Naive thymus-derived CD4-positive, alpha-beta T cell (primary cell): ENCODE measurements at regions of chr17 and their contacts with region 1.

Region 1: GRCh38 chr17:30477083-30477773 is at the start of gene GOSR1:
- DNase-seq: peak; percentile 78 to 92 (median 90)
- ATAC-seq: peak; percentile 99
- H3K4me3 ChIP-seq: peak within 1 kb of the TSS; percentile 82
- H3K4me3 Mint-ChIP-seq: peak within 1 kb of the TSS; percentile 92 to 99 (median 97)
- H3K27ac ChIP-seq: peak within 1 kb of the TSS; percentile 100
- H3K27ac Mint-ChIP-seq: peak within 1 kb of the TSS; percentile 94 to 99 (median 99)
- H3K4me1 ChIP-seq: peaks cover 11 to 13% of the 10 kb centered on the region in 2 donors
- H3K4me1 Mint-ChIP-seq: peaks cover 18 to 59% (median 47%) of the 10 kb centered on the region in 7 donors
- H3K27me3 ChIP-seq: no peaks in the 10 kb centered on the region
- H3K27me3 Mint-ChIP-seq: peaks cover 0 to 7% (median 2%) of the 10 kb centered on the region in 5 donors
- total RNA-seq, gene GOSR1: 45.1 to 70.8 (median 62.9) TPM

Region 2: DNA sequence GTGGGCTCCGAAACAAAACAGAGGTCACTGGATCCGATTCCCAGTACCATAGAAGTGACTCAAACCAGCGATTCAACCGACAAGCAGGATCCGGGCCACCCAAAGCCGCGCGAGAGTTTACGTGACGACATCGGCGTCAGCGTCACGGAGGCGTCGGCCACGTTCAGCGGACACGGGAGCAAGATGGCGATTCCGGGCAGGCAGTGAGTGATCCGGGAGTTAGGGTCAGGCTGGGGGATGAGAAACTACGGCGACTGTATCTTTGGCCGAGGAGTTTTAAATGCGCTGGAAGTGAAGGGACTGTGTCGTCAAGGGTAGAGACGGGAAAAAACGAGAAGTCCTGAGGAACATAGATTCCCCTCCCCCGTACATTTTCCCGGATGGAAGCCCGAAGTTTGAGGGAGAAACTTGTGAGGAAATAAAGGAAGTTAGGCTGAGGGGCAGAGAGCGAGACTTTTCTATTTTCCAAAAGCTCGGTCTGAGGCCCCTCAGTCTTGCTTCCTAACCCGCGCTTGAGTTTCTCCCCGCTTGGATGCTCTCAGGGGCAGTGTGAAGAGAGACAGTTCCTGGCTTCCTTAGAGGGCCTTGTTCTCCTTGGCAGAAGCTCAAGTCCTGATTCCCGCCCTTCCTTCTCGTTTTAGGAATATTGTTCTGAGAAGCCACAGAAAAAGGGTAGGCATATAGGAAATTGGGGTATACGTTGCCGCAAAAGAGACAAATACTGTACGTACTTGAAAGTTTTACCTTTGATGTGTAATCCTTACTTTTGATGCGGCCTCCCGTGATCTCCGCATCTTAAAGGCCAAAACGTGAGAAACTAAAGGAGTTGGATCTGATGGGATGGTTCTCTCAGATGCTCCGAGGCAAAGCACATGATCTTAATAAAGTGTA is 360.3 kb before region 1 on chr17 and contains the start of gene NSRP1:
- CTCF ChIA-PET with region 1: interaction called, 3 read pairs
- POLR2A ChIA-PET with region 1: no interaction called
- intact Hi-C with region 1: loop called (anchors 2 to 5 kb)
- DNase-seq: peak; percentile 82 to 93 (median 90)
- ATAC-seq: peak; percentile 99
- H3K4me3 ChIP-seq: peak within 1 kb of the TSS; percentile 96
- H3K4me3 Mint-ChIP-seq: peak within 1 kb of the TSS; percentile 91 to 100 (median 98)
- H3K27ac ChIP-seq: peak within 1 kb of the TSS; percentile 97
- H3K27ac Mint-ChIP-seq: peak within 1 kb of the TSS; percentile 97 to 100 (median 100)
- H3K4me1 ChIP-seq: peaks cover 3 to 10% of the 10 kb centered on the region in 2 donors
- H3K4me1 Mint-ChIP-seq: peaks cover 20 to 57% (median 48%) of the 10 kb centered on the region in 7 donors
- H3K27me3 ChIP-seq: no peaks in the 10 kb centered on the region
- H3K27me3 Mint-ChIP-seq: no peaks in the 10 kb centered on the region
- total RNA-seq, gene NSRP1: 25.6 to 34.7 (median 29.3) TPM

Region 3: GRCh38 chr17:30378824-30379302 is 98.4 kb before region 1 on chr17 and contains the start of gene CPD:
- CTCF ChIA-PET with region 1: no interaction called
- POLR2A ChIA-PET with region 1: no interaction called
- intact Hi-C with region 1: loop called (anchors 1 to 2 kb)
- DNase-seq: peak; percentile 93 to 99 (median 97)
- ATAC-seq: peak; percentile 98
- H3K4me3 ChIP-seq: peak within 1 kb of the TSS; percentile 76
- H3K4me3 Mint-ChIP-seq: peak within 1 kb of the TSS; percentile 90 to 99 (median 94)
- H3K27ac ChIP-seq: peak within 1 kb of the TSS; percentile 81
- H3K27ac Mint-ChIP-seq: peak within 1 kb of the TSS; percentile 89 to 98 (median 94)
- H3K4me1 ChIP-seq: peaks cover 20 to 50% of the 10 kb centered on the region in 2 donors
- H3K4me1 Mint-ChIP-seq: peaks cover 36 to 65% (median 55%) of the 10 kb centered on the region in 7 donors
- H3K27me3 ChIP-seq: no peaks in the 10 kb centered on the region
- H3K27me3 Mint-ChIP-seq: no peaks in the 10 kb centered on the region
- total RNA-seq, gene CPD: 16.5 to 52.9 (median 22.6) TPM

Region 4: DNA sequence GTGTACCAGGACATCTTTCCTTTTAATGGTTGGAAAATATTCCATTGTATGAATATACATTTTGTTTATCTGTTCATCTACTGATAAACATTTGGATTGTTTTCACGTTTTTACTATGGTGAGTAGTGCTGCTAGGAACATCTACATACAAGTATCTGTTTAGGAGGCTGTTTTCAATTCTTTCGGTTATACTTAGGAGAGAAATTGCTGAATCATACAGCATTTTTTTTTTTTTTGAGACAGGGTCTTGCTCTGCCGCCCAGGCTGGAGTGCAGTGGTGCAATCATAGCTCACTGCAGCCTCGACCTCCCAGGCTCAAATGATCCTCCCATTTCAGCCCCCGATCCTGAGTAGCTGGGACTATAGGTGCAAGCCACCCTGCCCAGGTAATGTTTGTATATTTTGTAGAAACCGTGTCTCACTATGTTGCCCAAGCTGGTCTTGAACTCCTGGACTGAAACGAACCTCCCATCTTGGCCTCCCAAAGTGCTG is 224.3 kb after region 1 on chr17:
- CTCF ChIA-PET with region 1: interaction called, 3 read pairs
- POLR2A ChIA-PET with region 1: no interaction called
- intact Hi-C with region 1: loop called in 1 of 2 experiments (anchors 1 kb)
- DNase-seq: no peak
- ATAC-seq: no peak
- H3K4me3 ChIP-seq: no peak overlapping the region
- H3K4me3 Mint-ChIP-seq: no peak overlapping the region
- H3K27ac ChIP-seq: no peak overlapping the region
- H3K27ac Mint-ChIP-seq: no peak overlapping the region
- H3K4me1 ChIP-seq: peaks cover 0 to 9% of the 10 kb centered on the region in 2 donors
- H3K4me1 Mint-ChIP-seq: peaks cover 5 to 15% (median 10%) of the 10 kb centered on the region in 7 donors
- H3K27me3 ChIP-seq: no peaks in the 10 kb centered on the region
- H3K27me3 Mint-ChIP-seq: peaks cover 0 to 55% (median 12%) of the 10 kb centered on the region in 5 donors

Region 5: GRCh38 chr17:30824356-30825145 is 347.3 kb after region 1 on chr17 and contains the start of gene CRLF3:
- CTCF ChIA-PET with region 1: interaction called, 6 read pairs
- POLR2A ChIA-PET with region 1: interaction called, 3 read pairs
- intact Hi-C with region 1: loop called (anchors 1 kb)
- DNase-seq: peak; percentile 88 to 94 (median 92)
- ATAC-seq: peak; percentile 97
- H3K4me3 ChIP-seq: peak within 1 kb of the TSS; percentile 62
- H3K4me3 Mint-ChIP-seq: peak within 1 kb of the TSS; percentile 92 to 100 (median 98)
- H3K27ac ChIP-seq: peak within 1 kb of the TSS; percentile 91
- H3K27ac Mint-ChIP-seq: peak within 1 kb of the TSS; percentile 84 to 99 (median 91)
- H3K4me1 ChIP-seq: peaks cover 23 to 25% of the 10 kb centered on the region in 2 donors
- H3K4me1 Mint-ChIP-seq: peaks cover 25 to 42% (median 36%) of the 10 kb centered on the region in 7 donors
- H3K27me3 ChIP-seq: no peaks in the 10 kb centered on the region
- H3K27me3 Mint-ChIP-seq: no peaks in the 10 kb centered on the region
- total RNA-seq, gene CRLF3: 65.5 to 142 (median 86.7) TPM

Region 6: DNA sequence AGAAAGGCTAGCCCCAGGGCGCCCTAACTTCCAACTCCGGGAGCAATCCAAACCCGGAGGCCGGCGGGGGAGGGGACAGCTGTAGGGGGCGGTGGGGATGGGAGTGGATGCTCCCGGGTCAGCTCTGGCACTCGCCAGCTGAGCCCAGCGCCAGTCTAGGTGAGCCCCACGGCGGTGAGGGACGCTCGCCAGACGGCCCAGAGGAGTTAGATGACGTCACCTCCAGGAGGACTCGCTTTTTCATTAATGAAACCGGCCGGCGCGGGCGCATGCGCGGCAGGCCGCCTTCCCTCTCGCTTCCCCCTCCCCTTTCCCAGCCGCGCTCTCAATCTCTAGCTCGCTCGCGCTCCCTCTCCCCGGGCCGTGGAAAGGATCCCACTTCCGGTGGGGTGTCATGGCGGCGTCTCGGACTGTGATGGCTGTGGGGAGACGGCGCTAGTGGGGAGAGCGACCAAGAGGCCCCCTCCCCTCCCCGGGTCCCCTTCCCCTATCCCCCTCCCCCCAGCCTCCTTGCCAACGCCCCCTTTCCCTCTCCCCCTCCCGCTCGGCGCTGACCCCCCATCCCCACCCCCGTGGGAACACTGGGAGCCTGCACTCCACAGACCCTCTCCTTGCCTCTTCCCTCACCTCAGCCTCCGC is 617.5 kb after region 1 on chr17 and contains the start of gene NF1:
- CTCF ChIA-PET with region 1: no interaction called
- POLR2A ChIA-PET with region 1: no interaction called
- intact Hi-C with region 1: loop called in 1 of 2 experiments (anchors 10 kb)
- DNase-seq: peak; percentile 57 to 86 (median 72)
- ATAC-seq: peak; percentile 88
- H3K4me3 ChIP-seq: peak within 1 kb of the TSS; percentile 71
- H3K4me3 Mint-ChIP-seq: peak within 1 kb of the TSS; percentile 83 to 98 (median 94)
- H3K27ac ChIP-seq: peak within 1 kb of the TSS; percentile 76
- H3K27ac Mint-ChIP-seq: peak within 1 kb of the TSS; percentile 80 to 97 (median 92)
- H3K4me1 ChIP-seq: peaks cover 0 to 8% of the 10 kb centered on the region in 2 donors
- H3K4me1 Mint-ChIP-seq: peaks cover 10 to 22% (median 13%) of the 10 kb centered on the region in 7 donors
- H3K27me3 ChIP-seq: no peaks in the 10 kb centered on the region
- H3K27me3 Mint-ChIP-seq: no peaks in the 10 kb centered on the region
- total RNA-seq, gene NF1: 18.8 to 32.4 (median 21.2) TPM

Region 7: DNA sequence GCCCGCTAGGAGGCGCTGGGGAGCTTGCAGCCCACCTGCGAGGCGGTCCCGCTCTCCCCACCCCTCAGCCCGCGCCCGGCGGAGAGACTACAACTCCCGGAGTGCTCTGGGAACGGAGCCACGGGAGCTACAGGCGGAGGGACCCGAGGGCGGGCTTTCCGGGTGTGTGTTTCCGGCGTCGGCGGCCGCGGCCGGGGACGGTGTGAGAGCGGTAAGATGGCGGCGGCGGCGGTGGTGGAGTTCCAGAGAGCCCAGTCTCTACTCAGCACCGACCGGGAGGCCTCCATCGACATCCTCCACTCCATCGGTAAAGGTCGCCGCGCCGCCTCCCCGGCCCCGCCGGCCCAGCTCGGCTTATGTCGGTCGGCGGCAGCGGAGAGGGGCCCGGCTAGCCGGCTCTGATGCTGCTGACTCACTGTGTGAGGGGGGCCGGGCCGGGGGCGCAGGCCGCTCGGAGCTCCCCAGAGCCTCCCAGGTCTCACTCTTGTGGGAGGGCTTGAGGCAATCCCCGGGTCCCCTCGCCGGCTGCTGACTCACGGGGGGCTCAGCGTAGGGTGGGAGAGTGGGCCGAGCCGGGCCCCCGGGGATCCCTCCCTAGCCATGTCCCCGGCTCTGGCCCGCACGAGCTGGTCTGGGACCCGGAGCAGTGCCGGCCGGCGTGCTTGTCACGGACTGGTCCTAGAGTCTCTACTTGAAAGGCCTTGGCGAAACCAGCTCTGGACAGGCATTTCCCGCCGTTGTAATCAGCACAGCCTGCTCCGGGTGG is 1967.3 kb after region 1 on chr17 and contains the start of gene PSMD11:
- CTCF ChIA-PET with region 1: no interaction called
- POLR2A ChIA-PET with region 1: no interaction called
- intact Hi-C with region 1: loop called in 1 of 2 experiments (anchors 2 kb)
- DNase-seq: peak; percentile 98 to 100 (median 99)
- ATAC-seq: peak; percentile 99
- H3K4me3 ChIP-seq: peak within 1 kb of the TSS; percentile 80
- H3K4me3 Mint-ChIP-seq: peak within 1 kb of the TSS; percentile 78 to 93 (median 86)
- H3K27ac ChIP-seq: peak within 1 kb of the TSS; percentile 94
- H3K27ac Mint-ChIP-seq: peak within 1 kb of the TSS; percentile 52 to 83 (median 78)
- H3K4me1 ChIP-seq: peaks cover 13 to 14% of the 10 kb centered on the region in 2 donors
- H3K4me1 Mint-ChIP-seq: peaks cover 25 to 46% (median 36%) of the 10 kb centered on the region in 7 donors
- H3K27me3 ChIP-seq: no peaks in the 10 kb centered on the region
- H3K27me3 Mint-ChIP-seq: peaks cover 0 to 23% (median 0%) of the 10 kb centered on the region in 5 donors
- total RNA-seq, gene PSMD11: 60.1 to 112 (median 67.5) TPM